Breast epithelium (tissue), 4 donors: ENCODE measurements at regions of chr5 and their contacts with region 1.

Region 1: GRCh38 chr5:133341915-133342710 is 270.2 kb downstream of the FSTL4 start:
- DNase-seq: peak in 1 of 2 donors; percentile 37
- H3K4me3 ChIP-seq: no peak overlapping the region
- H3K27ac ChIP-seq: no peak overlapping the region
- H3K4me1 ChIP-seq: no peaks in the 10 kb centered on the region
- H3K27me3 ChIP-seq: no peaks in the 10 kb centered on the region
- CTCF ChIP-seq: no peak
- POLR2A ChIP-seq: no peak

Region 2: GRCh38 chr5:133321833-133322420 is 20.2 kb before region 1 on chr5:
- intact Hi-C with region 1: no loop called
- DNase-seq: no peak
- H3K4me3 ChIP-seq: no peak overlapping the region
- H3K27ac ChIP-seq: no peak overlapping the region
- H3K4me1 ChIP-seq: no peaks in the 10 kb centered on the region
- H3K27me3 ChIP-seq: no peaks in the 10 kb centered on the region
- CTCF ChIP-seq: no peak
- POLR2A ChIP-seq: no peak

Region 3: GRCh38 chr5:133364936-133365707 is 23.0 kb after region 1 on chr5:
- intact Hi-C with region 1: no loop called
- DNase-seq: no peak
- H3K4me3 ChIP-seq: no peak overlapping the region
- H3K27ac ChIP-seq: no peak overlapping the region
- H3K4me1 ChIP-seq: no peaks in the 10 kb centered on the region
- H3K27me3 ChIP-seq: no peaks in the 10 kb centered on the region
- CTCF ChIP-seq: no peak
- POLR2A ChIP-seq: no peak

Region 4: DNA sequence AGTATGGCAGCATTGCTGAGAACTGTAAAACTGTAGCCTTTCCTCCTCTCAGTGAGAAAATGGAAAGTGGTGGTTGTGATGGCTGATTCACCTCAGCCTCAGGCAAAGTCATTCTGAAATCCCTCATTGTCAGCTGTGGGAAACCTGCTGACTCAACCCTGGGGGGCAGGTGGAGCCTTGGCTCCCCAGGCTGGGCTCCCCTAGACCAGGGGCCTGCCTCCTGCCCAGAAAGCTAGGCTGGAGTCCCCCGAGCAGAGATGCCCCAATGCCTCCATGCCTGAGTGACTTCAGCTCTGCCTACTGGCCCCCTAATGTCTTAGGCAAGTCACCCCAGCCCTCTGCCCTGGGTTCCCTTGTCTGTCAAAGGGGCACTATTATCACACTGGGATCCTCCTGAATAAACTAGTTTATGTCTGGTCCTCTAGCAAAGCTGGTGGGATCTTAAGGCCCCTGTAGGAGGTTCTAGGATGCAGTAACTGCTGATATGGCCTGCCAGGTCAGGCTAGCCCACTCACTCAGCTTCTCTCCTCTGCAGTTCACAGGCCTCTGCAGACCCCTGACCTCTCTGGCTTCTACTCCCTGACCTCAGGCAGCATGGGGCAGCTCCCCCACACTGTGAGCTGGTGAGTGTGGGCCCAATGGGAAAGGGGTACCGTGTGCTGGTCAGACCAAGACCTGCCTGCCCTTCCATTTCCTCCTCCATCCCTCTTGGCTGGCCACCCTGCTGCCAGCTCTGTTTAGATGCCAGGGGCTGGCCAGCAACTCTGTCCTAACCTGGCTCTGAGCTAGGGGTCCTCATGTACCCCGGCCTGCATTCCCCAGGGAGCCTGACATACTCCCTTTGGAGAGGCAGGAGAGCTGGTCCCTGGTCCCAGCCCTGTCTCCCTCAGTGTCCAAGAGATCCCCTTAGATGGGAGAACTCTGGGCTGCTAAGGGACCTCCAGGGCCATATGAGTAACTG is 796.6 kb after region 1 on chr5:
- intact Hi-C with region 1: loop called (anchors 5 kb)
- DNase-seq: peak; percentile 16 to 43
- H3K4me3 ChIP-seq: no peak overlapping the region
- H3K27ac ChIP-seq: peak overlapping the region; percentile 29 to 33
- H3K4me1 ChIP-seq: peaks cover 2 to 6% of the 10 kb centered on the region in 2 donors
- H3K27me3 ChIP-seq: no peaks in the 10 kb centered on the region
- CTCF ChIP-seq: no peak
- POLR2A ChIP-seq: no peak